H1 (cell line): ENCODE measurements at regions of chr7 and their contacts with region 1.

Region 1: DNA sequence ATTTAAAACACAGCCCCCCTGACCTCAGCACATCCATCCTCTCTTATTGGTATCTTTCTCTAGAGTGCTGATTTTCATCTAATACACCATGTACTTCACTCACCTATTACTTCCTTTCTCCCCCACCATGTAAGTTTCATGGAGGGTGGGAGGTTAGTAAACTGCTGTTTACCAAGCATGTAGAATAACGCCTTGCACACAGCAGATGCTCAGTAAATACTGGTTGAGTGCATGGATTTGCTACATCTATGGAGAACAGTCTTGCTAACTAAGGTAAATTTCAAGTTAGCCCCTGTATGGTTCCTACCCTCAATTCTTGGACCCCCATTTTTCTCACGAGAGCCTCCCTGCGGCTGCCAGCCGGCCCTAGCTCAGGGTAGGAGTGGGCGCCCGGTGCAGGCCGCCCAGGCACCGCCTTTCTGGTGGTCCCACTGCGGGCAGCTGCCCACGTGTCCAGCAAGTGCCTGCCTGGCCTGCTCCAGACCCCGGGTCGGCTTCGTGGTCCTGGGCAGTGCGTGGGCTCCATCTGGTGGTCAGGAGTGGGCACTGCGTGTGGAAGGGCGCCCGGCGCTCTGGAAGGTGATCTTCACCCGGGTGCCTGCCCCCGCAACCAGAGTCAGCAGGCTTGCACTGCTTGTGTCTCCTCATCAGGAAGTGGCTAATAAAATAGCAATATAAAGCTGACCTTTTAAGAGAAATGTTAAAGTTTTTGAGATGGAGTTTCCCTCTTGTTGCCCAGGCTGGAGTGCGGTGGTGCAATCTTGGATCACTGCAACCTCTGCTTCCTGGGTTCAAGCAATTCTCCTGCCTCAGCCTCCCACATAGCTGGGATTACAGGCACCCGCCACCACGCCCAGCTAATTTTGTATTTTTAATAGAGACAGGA is 63.4 kb upstream of the DNAJB6 start:
- DNase-seq: peak; percentile 72 to 92
- H3K4me3 ChIP-seq: no peak overlapping the region
- H3K27ac ChIP-seq: no peak overlapping the region
- H3K4me1 ChIP-seq: peaks cover 0 to 7% (median 1%) of the 10 kb centered on the region in 4 experiments; a peak in 5 of 7 replicates
- H3K27me3 ChIP-seq: no peaks in the 10 kb centered on the region
- CTCF ChIP-seq: peak in 2 of 3 experiments; percentile 97 to 98; a peak in 3 of 4 replicates
- EP300 ChIP-seq: no peak
- POLR2A ChIP-seq: no peak
- RAD21 ChIP-seq: peak; percentile 98

Region 2: DNA sequence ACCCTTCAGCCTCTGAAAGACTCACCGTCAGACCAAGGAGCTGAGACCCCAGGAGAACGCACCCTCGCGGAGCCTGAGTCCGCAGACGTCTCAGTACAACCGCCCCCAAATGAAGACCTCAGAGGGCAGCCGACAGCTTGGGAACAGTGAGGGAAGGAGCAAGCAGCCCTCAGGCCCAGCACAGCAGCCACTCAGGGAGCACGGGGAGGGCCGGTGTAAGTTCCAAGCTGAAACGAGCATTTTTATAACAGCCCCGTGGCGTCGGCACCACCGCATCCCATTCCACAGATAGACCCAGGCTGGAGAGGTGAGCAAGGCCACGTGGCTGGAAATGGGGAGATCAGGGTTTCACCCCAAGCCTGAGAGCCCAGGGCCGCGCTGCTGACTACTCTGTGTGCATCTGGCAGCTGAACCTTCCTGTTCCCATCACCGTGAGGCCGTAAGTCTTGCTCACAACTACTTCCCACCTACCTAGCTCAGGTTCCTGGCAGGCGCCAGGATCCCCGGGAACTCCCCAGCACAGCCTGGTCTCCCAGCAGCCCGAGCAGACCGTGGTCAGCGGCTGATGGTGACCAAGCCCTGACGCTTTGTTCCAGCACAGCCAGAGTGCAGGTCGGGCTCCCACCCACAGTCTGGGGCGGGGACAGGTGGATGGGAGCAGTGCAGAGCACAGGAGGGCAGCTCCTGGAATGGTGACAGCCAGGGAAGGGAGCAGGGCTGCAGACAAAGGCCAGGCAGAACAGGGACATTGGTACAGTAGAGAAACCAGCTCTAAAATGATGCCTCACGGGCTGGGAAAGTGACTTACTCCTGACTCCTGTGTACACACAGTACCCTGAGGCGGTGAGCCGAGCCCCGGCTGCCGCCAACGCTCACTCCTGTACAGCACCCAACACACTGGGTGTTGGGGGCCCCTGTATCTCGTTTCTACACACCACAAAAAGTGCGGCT is 330.1 kb before region 1 on chr7:
- CTCF ChIA-PET with region 1: no interaction called
- POLR2A ChIA-PET with region 1: no interaction called
- DNase-seq: no peak
- H3K4me3 ChIP-seq: no peak overlapping the region
- H3K27ac ChIP-seq: no peak overlapping the region
- H3K4me1 ChIP-seq: peaks cover 0 to 18% (median 2%) of the 10 kb centered on the region in 4 experiments; a peak in 4 of 7 replicates
- H3K27me3 ChIP-seq: no peaks in the 10 kb centered on the region
- CTCF ChIP-seq: no peak
- EP300 ChIP-seq: no peak
- POLR2A ChIP-seq: no peak
- RAD21 ChIP-seq: no peak

Region 3: DNA sequence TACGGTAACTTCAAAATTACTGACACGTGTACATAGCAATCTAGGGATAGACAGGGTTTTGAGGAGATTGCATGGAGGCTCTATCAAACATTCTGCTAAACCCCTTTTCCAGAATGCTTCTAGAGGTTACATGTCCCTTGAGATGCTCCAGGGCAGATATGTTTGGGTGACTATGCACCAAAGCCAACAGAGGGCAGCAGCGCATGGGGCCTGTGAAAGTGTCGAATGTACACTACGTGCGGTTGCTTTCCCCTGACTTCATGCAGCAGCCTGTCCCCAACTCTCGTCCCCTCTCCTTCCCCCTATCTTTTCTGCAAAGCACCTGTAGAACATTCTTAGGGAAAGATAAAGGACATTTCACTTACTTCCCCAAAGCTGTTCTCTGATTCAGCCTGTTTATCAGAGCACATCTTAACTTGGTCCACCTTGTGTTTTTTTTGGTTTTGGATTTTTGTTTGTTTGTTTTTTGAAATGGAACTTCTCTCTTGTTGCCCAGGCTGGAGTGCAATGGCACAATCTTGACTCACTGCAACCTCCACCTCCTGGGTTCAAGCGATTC is 44.5 kb before region 1 on chr7:
- CTCF ChIA-PET with region 1: interaction called, 13 read pairs
- POLR2A ChIA-PET with region 1: no interaction called
- DNase-seq: no peak
- H3K4me3 ChIP-seq: no peak overlapping the region
- H3K27ac ChIP-seq: no peak overlapping the region
- H3K4me1 ChIP-seq: no peaks in the 10 kb centered on the region
- H3K27me3 ChIP-seq: no peaks in the 10 kb centered on the region
- CTCF ChIP-seq: peak; percentile 52 to 69 (median 69)
- EP300 ChIP-seq: no peak
- POLR2A ChIP-seq: no peak
- RAD21 ChIP-seq: peak; percentile 53 to 56

Region 4: DNA sequence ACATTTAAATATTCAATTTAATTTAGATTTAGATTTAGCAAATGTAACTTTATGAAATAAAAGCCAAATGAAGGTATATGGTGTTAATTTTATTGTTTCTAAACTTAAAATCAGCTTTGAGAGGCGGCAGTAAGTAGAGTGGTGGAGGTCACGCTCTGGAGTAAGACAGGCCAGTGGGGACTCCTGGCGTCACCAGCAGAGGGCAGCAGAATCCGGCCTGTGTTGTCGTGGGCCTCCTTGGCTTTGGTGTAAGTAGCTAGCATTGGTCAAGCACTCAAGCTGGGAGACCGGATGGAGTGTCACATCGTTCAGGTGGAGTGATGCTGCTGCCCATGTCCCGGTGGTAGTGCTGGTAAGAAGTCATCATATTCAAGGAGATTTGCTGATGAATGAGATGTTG is 35.4 kb before region 1 on chr7:
- CTCF ChIA-PET with region 1: interaction called, 13 read pairs
- POLR2A ChIA-PET with region 1: interaction called, 3 read pairs
- DNase-seq: peak in 1 of 2 experiments; percentile 68
- H3K4me3 ChIP-seq: no peak overlapping the region
- H3K27ac ChIP-seq: no peak overlapping the region
- H3K4me1 ChIP-seq: no peaks in the 10 kb centered on the region
- H3K27me3 ChIP-seq: no peaks in the 10 kb centered on the region
- CTCF ChIP-seq: peak; percentile 56 to 80 (median 77)
- EP300 ChIP-seq: no peak
- POLR2A ChIP-seq: no peak
- RAD21 ChIP-seq: peak; percentile 44 to 61

Region 5: GRCh38 chr7:157299613-157300368 is 26.3 kb after region 1 on chr7:
- CTCF ChIA-PET with region 1: interaction called, 16 read pairs
- POLR2A ChIA-PET with region 1: no interaction called
- DNase-seq: no peak
- H3K4me3 ChIP-seq: no peak overlapping the region
- H3K27ac ChIP-seq: no peak overlapping the region
- H3K4me1 ChIP-seq: peaks cover 0 to 2% (median under 1%) of the 10 kb centered on the region in 4 experiments; a peak in 5 of 7 replicates
- H3K27me3 ChIP-seq: peaks cover 0 to 7% (median 0%) of the 10 kb centered on the region in 4 experiments; a peak in 1 of 7 replicates
- CTCF ChIP-seq: peak in 1 of 3 experiments; percentile 37; a peak in 1 of 4 replicates
- EP300 ChIP-seq: no peak
- POLR2A ChIP-seq: no peak
- RAD21 ChIP-seq: no peak

Region 6: DNA sequence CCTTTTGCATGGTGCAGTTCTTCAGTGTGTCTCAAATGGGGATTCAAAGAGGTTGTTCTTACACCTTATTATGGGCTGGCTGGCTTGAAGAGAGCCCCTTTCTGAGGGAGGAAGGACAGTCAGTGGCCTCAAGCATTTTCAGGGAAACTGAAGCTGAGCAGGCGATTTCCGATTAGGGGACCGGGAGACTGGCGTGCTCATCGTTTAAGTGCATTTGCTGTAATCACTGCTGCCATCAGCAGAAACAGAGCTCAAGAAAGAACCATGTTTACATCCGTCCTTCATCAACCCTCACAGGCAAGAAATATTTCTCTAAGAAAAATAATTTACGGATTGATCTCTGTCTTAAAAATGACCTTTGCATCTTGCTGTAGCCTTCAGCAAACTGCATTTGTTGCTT is 95.5 kb after region 1 on chr7:
- CTCF ChIA-PET with region 1: no interaction called
- POLR2A ChIA-PET with region 1: no interaction called
- DNase-seq: no peak
- H3K4me3 ChIP-seq: no peak overlapping the region
- H3K27ac ChIP-seq: no peak overlapping the region
- H3K4me1 ChIP-seq: no peaks in the 10 kb centered on the region; a peak in 2 of 7 replicates
- H3K27me3 ChIP-seq: no peaks in the 10 kb centered on the region
- CTCF ChIP-seq: no peak
- EP300 ChIP-seq: no peak
- POLR2A ChIP-seq: 0 out of 3 replicates have a peak, but pooled peaks of 1 of the 2 experiments have one; percentile 4
- RAD21 ChIP-seq: no peak